ENCODE measurements at regions of chr17 and their contacts with region 1.

Region 1: GRCh38 chr17:39754161-39754951 is 16.6 kb downstream of the GRB7 start:
- DNase-seq: peak; percentile 99
- ATAC-seq: peak; percentile 70
- H3K4me3 Mint-ChIP-seq: peak overlapping the region; percentile 77
- H3K27ac Mint-ChIP-seq: peak overlapping the region; percentile 97
- H3K4me1 Mint-ChIP-seq: peaks cover 64% of the 10 kb centered on the region
- H3K27me3 Mint-ChIP-seq: no peaks in the 10 kb centered on the region
- CTCF ChIP-seq: peak; percentile 41

Region 2: GRCh38 chr17:39461113-39461925 is 293.0 kb before region 1 on chr17 and contains the start of gene CDK12:
- CTCF ChIA-PET with region 1: no interaction called
- POLR2A ChIA-PET with region 1: interaction called, 17 read pairs
- intact Hi-C with region 1: loop called (anchors 1 kb)
- DNase-seq: peak; percentile 87
- ATAC-seq: peak; percentile 87
- H3K4me3 Mint-ChIP-seq: peak within 1 kb of the TSS; percentile 97
- H3K27ac Mint-ChIP-seq: peak within 1 kb of the TSS; percentile 98
- H3K4me1 Mint-ChIP-seq: peaks cover 50% of the 10 kb centered on the region
- H3K27me3 Mint-ChIP-seq: no peaks in the 10 kb centered on the region
- CTCF ChIP-seq: no peak
- total RNA-seq, gene CDK12: 100 and 118 TPM in 2 replicates

Region 3: GRCh38 chr17:39636927-39637736 is 117.2 kb before region 1 on chr17 and contains the start of gene STARD3:
- CTCF ChIA-PET with region 1: no interaction called
- POLR2A ChIA-PET with region 1: interaction called, 4 read pairs
- intact Hi-C with region 1: loop called (anchors 1 kb)
- DNase-seq: peak; percentile 90
- ATAC-seq: peak; percentile 92
- H3K4me3 Mint-ChIP-seq: peak within 1 kb of the TSS; percentile 90
- H3K27ac Mint-ChIP-seq: peak within 1 kb of the TSS; percentile 86
- H3K4me1 Mint-ChIP-seq: peaks cover 63% of the 10 kb centered on the region
- H3K27me3 Mint-ChIP-seq: no peaks in the 10 kb centered on the region
- CTCF ChIP-seq: no peak
- total RNA-seq, gene STARD3: 51.8 and 58.2 TPM in 2 replicates

Region 4: GRCh38 chr17:39716879-39717536 is 37.3 kb before region 1 on chr17:
- CTCF ChIA-PET with region 1: no interaction called
- POLR2A ChIA-PET with region 1: no interaction called
- intact Hi-C with region 1: no loop called
- DNase-seq: no peak
- ATAC-seq: no peak
- H3K4me3 Mint-ChIP-seq: no peak overlapping the region
- H3K27ac Mint-ChIP-seq: no peak overlapping the region
- H3K4me1 Mint-ChIP-seq: no peaks in the 10 kb centered on the region
- H3K27me3 Mint-ChIP-seq: no peaks in the 10 kb centered on the region
- CTCF ChIP-seq: no peak

Region 5: GRCh38 chr17:39738931-39739884 is 15.1 kb before region 1 on chr17:
- CTCF ChIA-PET with region 1: no interaction called
- POLR2A ChIA-PET with region 1: interaction called, 4 read pairs
- intact Hi-C with region 1: loop called (anchors 2 kb)
- DNase-seq: no peak
- ATAC-seq: peak; percentile 12
- H3K4me3 Mint-ChIP-seq: peak overlapping the region; percentile 81
- H3K27ac Mint-ChIP-seq: no peak overlapping the region
- H3K4me1 Mint-ChIP-seq: peaks cover 26% of the 10 kb centered on the region
- H3K27me3 Mint-ChIP-seq: peaks cover 25% of the 10 kb centered on the region
- CTCF ChIP-seq: no peak

Region 6: DNA sequence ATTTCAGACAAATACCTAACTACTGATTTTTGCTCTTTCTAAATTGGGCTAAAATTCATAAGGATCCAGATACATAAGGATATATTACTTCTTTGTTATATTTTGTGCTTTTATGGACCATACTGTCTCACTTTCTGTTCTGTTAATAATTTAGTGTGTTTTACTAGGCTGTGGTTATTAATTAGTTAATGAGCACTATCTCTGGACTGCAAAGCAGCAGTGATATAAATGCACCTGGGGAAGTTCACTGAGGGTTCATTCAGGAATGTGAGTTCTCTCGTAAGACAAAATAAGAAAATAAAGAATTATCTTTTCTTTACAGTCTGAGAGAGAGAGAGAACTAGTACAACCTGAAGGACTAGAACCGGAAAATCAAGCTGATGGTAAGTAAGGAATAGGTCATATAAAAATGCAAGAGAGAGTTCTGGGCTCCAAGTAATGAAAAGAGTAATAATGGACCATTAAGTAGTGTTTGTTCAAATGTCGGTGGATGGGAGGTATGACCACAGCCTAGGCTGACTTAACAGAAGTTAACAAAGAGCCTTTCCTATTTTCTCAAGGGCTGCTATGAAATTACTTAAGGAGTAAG is 54.1 kb after region 1 on chr17:
- CTCF ChIA-PET with region 1: no interaction called
- POLR2A ChIA-PET with region 1: interaction called, 18 read pairs
- intact Hi-C with region 1: no loop called
- DNase-seq: no peak
- ATAC-seq: no peak
- H3K4me3 Mint-ChIP-seq: peak overlapping the region; percentile 12
- H3K27ac Mint-ChIP-seq: peak overlapping the region; percentile 74
- H3K4me1 Mint-ChIP-seq: peaks cover 75% of the 10 kb centered on the region
- H3K27me3 Mint-ChIP-seq: no peaks in the 10 kb centered on the region
- CTCF ChIP-seq: no peak

Region 7: DNA sequence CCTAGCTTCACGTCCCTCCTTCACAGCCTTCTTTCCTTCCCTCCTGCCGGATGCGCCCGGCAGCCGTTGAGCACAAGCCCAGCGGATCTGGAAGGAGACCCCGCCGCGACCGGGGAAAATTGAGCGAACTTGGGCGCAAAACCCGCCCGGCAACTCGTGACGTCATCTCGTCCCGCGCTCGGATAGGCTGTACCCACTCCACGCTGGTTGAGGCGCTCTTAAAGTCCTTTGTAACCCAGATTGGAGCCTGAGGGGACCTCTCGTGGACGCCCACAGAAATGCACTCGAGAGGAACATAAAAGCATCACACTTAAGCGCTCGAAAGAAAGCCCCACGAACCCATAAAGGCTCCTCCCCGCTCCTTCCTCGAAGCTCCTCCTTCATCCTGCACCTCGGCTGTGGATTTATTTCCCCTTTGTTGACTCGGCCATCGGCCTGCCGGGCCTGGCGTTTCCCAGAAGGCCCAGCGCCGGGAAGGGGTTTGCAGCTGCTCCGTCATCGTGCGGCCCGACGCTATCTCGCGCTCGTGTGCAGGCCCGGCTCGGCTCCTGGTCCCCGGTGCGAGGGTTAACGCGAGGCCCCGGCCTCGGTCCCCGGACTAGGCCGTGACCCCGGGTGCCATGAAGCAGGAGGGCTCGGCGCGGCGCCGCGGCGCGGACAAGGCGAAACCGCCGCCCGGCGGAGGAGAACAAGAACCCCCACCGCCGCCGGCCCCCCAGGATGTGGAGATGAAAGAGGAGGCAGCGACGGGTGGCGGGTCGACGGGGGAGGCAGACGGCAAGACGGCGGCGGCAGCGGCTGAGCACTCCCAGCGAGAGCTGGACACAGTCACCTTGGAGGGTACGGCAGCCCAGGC is 226.2 kb after region 1 on chr17 and contains the start of gene PSMD3:
- CTCF ChIA-PET with region 1: interaction called, 4 read pairs
- POLR2A ChIA-PET with region 1: interaction called, 17 read pairs
- intact Hi-C with region 1: loop called (anchors 1 kb)
- DNase-seq: peak; percentile 90
- ATAC-seq: peak; percentile 93
- H3K4me3 Mint-ChIP-seq: peak within 1 kb of the TSS; percentile 96
- H3K27ac Mint-ChIP-seq: peak within 1 kb of the TSS; percentile 96
- H3K4me1 Mint-ChIP-seq: peaks cover 36% of the 10 kb centered on the region
- H3K27me3 Mint-ChIP-seq: peaks cover under 1% of the 10 kb centered on the region
- CTCF ChIP-seq: no peak
- total RNA-seq, gene PSMD3: 115 and 127 TPM in 2 replicates

Measured in activated B cell treated with CpG ODN at 0.5 μM for 24 hours (primary cell).